Ascending aorta (tissue), 2 donors: ENCODE measurements at regions of chr19 and their contacts with region 1.

Region 1: DNA sequence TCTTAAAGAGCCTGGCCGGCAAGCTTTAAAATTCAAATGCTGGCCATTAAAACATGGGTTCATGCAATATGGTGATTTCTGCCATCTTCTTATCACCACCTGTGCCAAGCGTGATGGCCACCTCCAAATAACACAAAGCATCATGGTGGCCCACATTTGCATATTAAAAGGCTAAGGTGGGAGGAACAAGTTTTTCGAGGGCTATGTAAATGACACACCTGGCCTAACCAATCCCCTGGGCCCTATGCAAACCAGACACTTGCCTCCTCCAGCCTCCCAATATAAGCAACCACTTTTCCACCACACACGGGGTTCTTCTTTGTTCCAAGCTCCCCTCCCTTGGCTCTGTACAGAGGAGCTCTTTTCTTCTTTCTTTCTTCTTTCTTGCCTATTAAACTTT is 14.4 kb downstream of the LILRB4 start:
- DNase-seq: no peak
- H3K4me3 ChIP-seq: no peak overlapping the region
- H3K27ac ChIP-seq: no peak overlapping the region
- H3K4me1 ChIP-seq: no peaks in the 10 kb centered on the region
- H3K27me3 ChIP-seq: no peaks in the 10 kb centered on the region
- CTCF ChIP-seq: no peak

Region 2: DNA sequence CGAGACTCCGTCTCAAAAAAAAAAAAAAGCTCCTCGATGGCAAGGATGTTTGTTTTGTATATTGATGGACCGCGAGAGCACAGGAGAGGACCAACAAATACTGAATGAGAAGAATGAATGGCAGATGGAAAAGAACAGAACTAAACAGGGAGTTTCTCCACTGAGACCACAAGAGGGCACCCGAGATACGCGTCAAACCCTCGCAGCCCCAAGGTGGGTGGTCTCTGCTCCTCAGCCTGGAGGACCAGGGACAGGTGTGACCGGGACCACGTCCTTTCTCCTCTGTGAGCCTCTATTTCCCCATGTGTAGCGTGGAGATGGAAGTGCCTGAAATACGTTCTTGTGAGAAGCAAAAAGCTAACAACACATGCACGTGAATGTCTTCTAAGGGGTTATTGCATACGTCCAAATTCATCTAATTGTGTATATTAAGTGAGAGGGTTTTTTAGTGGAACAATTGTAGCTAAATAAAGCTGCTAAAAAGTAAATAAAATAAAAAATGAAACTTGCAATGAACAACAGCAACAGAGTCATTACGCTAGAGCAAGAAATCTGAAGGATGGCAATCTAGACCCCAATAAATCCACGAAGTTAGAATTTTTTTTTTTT is 195.8 kb before region 1 on chr19:
- intact Hi-C with region 1: loop called (anchors 5 kb)
- DNase-seq: no peak
- H3K4me3 ChIP-seq: no peak overlapping the region
- H3K27ac ChIP-seq: no peak overlapping the region
- H3K4me1 ChIP-seq: no peaks in the 10 kb centered on the region
- H3K27me3 ChIP-seq: no peaks in the 10 kb centered on the region
- CTCF ChIP-seq: peak in 2 of 3 experiments; percentile 55 to 66

Region 3: GRCh38 chr19:54696117-54696548 is 18.9 kb after region 1 on chr19:
- intact Hi-C with region 1: no loop called
- DNase-seq: no peak
- H3K4me3 ChIP-seq: no peak overlapping the region
- H3K27ac ChIP-seq: no peak overlapping the region
- H3K4me1 ChIP-seq: no peaks in the 10 kb centered on the region
- H3K27me3 ChIP-seq: no peaks in the 10 kb centered on the region
- CTCF ChIP-seq: no peak